ENCODE measurements at regions of chr3 and their contacts with region 1.

Region 1: GRCh38 chr3:16945330-16945729 is 60.6 kb downstream of the PLCL2 start:
- DNase-seq: no peak
- ATAC-seq: peak in 1 of 2 donors; percentile 44
- H3K4me3 ChIP-seq: no peak overlapping the region
- H3K27ac ChIP-seq: no peak overlapping the region
- H3K4me1 ChIP-seq: peaks cover 8% of the 10 kb centered on the region
- H3K27me3 ChIP-seq: no peaks in the 10 kb centered on the region

Region 2: GRCh38 chr3:16816048-16816780 is 129.1 kb before region 1 on chr3:
- intact Hi-C with region 1: no loop called
- DNase-seq: no peak
- ATAC-seq: peak in 1 of 2 donors; percentile 31
- H3K4me3 ChIP-seq: no peak overlapping the region
- H3K27ac ChIP-seq: no peak overlapping the region
- H3K4me1 ChIP-seq: no peaks in the 10 kb centered on the region
- H3K27me3 ChIP-seq: no peaks in the 10 kb centered on the region

Region 3: DNA sequence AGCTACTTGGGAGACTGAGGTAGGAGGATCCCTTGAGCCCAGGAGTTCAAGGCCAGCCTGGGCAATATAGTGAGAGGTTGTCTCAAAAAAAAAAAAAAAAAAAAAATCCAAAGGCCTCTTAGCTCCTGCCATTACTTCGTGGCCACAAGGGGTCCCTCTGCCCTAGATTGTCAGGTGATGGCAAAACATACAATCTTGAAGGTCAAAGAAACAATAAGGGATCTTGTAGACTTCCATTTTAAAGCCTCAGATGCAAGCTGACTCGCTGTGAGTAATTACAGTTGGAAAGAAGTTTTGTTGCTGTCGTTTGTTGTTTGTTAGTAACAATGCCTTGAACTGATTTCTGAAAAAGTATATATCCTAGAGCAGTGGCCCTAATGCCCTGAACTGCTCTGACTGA is 116.5 kb before region 1 on chr3:
- intact Hi-C with region 1: no loop called
- DNase-seq: peak in 1 of 3 donors; percentile 53
- ATAC-seq: no peak
- H3K4me3 ChIP-seq: no peak overlapping the region
- H3K27ac ChIP-seq: no peak overlapping the region
- H3K4me1 ChIP-seq: peaks cover 5% of the 10 kb centered on the region
- H3K27me3 ChIP-seq: no peaks in the 10 kb centered on the region

Region 4: GRCh38 chr3:16884084-16884747 is 61.1 kb before region 1 on chr3:
- intact Hi-C with region 1: loop called in 1 of 4 experiments (anchors 10 kb)
- DNase-seq: peak; percentile 78 to 92 (median 86)
- ATAC-seq: peak; percentile 79 to 85
- H3K4me3 ChIP-seq: peak overlapping the region; percentile 59
- H3K27ac ChIP-seq: peak overlapping the region; percentile 31
- H3K4me1 ChIP-seq: peaks cover 2% of the 10 kb centered on the region
- H3K27me3 ChIP-seq: no peaks in the 10 kb centered on the region

Region 5: DNA sequence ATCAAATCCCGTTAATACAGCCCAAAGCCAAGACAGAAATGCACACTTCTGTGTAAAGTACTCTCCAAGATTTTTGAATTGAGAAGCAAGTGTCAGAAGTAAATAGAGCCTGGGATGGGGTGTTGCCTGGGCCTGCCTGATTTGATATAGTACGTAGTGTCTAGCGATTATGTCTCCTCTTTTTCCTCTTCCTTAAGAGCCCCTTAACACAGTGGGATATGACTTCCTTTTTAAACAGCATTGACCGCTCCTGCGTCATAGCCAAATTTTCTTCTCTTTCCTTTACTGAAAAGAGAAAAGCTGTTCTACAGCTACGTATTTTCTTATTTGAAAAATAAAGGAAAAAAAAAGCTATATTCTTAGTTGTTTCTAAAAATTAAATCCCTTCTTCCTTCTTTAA is 37.1 kb after region 1 on chr3:
- intact Hi-C with region 1: no loop called
- DNase-seq: no peak
- ATAC-seq: peak in 1 of 2 donors; percentile 34
- H3K4me3 ChIP-seq: no peak overlapping the region
- H3K27ac ChIP-seq: no peak overlapping the region
- H3K4me1 ChIP-seq: peaks cover 2% of the 10 kb centered on the region
- H3K27me3 ChIP-seq: no peaks in the 10 kb centered on the region

Region 6: GRCh38 chr3:17175187-17175804 is 230.0 kb after region 1 on chr3:
- intact Hi-C with region 1: no loop called
- DNase-seq: no peak
- ATAC-seq: peak; percentile 46 to 66
- H3K4me3 ChIP-seq: no peak overlapping the region
- H3K27ac ChIP-seq: no peak overlapping the region
- H3K4me1 ChIP-seq: peaks cover 5% of the 10 kb centered on the region
- H3K27me3 ChIP-seq: no peaks in the 10 kb centered on the region